Activated CD4-positive, alpha-beta memory T cell treated with anti-CD3 and anti-CD28 coated beads, Interleukin-2, amount 10 ng/mL, durations not matched to agents 7 days and 5 days (primary cell): ENCODE measurements at regions of chr9 and their contacts with region 1.

Region 1: GRCh38 chr9:131125128-131126058 is at the start of gene NUP214:
- DNase-seq: peak; percentile 100
- H3K4me3 Mint-ChIP-seq: peak within 1 kb of the TSS; percentile 95
- H3K27ac Mint-ChIP-seq: peak within 1 kb of the TSS; percentile 94
- H3K4me1 Mint-ChIP-seq: peaks cover 34% of the 10 kb centered on the region
- H3K27me3 Mint-ChIP-seq: no peaks in the 10 kb centered on the region
- total RNA-seq, gene NUP214: 43.8 to 51.3 TPM

Region 2: GRCh38 chr9:130962418-130963316 is 162.7 kb before region 1 on chr9:
- CTCF ChIA-PET with region 1: no interaction called
- POLR2A ChIA-PET with region 1: no interaction called
- DNase-seq: no peak
- H3K4me3 Mint-ChIP-seq: no peak overlapping the region
- H3K27ac Mint-ChIP-seq: no peak overlapping the region
- H3K4me1 Mint-ChIP-seq: peaks cover 6% of the 10 kb centered on the region
- H3K27me3 Mint-ChIP-seq: no peaks in the 10 kb centered on the region

Region 3: DNA sequence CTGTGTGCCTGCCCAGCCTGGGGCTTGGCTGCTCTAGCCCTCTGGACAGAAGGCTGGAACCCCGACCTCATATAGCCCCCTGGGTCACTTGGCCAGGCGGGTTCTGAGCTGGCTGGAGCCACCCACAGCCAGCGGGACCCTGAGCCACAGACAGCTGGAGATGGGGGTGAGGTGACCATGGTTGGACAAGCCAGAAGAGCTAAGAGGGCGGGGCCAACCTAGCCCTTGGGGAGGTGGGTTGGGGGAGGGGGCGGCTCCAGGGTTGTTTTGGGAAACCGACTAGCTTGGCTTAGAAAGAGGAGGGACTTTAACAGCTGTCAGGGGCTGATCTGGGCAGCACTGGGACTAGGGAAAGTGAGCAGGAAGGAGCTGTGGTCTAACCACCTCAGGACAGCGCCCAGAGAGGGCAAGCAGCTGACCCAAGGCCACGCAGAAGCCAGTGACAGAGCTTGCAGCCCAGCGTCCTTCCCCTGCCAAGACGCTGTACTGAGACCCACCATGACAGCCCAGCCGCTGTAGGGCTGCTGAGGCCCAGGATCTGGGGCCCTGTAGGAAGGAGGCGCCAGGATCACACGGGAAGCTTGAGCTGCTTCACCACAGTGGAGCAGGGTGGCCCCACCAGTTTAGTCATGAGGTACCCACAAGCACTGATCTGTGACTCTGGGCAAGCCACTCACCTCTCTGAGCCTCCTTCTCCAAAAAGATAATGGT is 26.8 kb before region 1 on chr9:
- CTCF ChIA-PET with region 1: no interaction called
- POLR2A ChIA-PET with region 1: interaction called, 12 read pairs
- DNase-seq: no peak
- H3K4me3 Mint-ChIP-seq: no peak overlapping the region
- H3K27ac Mint-ChIP-seq: no peak overlapping the region
- H3K4me1 Mint-ChIP-seq: peaks cover 18% of the 10 kb centered on the region
- H3K27me3 Mint-ChIP-seq: peaks cover 33% of the 10 kb centered on the region

Region 4: GRCh38 chr9:131138676-131139075 is 13.3 kb after region 1 on chr9:
- CTCF ChIA-PET with region 1: no interaction called
- POLR2A ChIA-PET with region 1: interaction called, 12 read pairs
- DNase-seq: no peak
- H3K4me3 Mint-ChIP-seq: no peak overlapping the region
- H3K27ac Mint-ChIP-seq: no peak overlapping the region
- H3K4me1 Mint-ChIP-seq: no peaks in the 10 kb centered on the region
- H3K27me3 Mint-ChIP-seq: no peaks in the 10 kb centered on the region

Region 5: DNA sequence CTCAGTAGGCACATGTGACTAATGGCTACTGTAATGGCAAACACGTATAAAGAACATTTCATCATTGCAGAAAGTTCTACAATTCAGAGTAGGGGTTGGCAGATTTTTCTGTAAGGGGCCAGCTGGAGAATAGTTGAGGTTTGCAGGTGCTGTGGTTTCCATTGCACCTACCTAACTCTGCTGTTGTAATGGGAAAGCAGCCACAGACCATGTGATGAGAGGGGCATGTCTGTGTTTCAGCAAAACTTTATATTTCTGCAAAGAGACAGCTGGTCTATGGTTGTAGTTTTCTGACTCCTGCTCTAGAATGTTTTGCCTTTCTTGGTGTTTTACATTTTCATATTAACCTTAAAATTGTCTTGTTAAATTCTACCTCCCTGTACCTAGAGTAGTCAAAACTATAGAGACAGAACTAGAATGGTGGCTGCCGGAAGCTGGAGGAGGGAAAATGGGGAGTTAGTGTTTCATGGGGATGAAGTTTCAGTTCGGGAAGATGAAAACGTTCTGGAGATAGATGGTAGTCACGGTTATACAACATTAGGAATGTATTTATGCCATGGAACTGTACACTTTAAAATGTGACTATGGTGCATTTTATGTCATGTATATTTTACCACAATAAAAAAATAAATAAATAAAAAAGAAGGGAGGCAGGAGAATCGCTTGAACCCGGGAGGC is 44.3 kb after region 1 on chr9:
- CTCF ChIA-PET with region 1: no interaction called
- POLR2A ChIA-PET with region 1: no interaction called
- DNase-seq: no peak
- H3K4me3 Mint-ChIP-seq: no peak overlapping the region
- H3K27ac Mint-ChIP-seq: no peak overlapping the region
- H3K4me1 Mint-ChIP-seq: no peaks in the 10 kb centered on the region
- H3K27me3 Mint-ChIP-seq: no peaks in the 10 kb centered on the region

Region 6: DNA sequence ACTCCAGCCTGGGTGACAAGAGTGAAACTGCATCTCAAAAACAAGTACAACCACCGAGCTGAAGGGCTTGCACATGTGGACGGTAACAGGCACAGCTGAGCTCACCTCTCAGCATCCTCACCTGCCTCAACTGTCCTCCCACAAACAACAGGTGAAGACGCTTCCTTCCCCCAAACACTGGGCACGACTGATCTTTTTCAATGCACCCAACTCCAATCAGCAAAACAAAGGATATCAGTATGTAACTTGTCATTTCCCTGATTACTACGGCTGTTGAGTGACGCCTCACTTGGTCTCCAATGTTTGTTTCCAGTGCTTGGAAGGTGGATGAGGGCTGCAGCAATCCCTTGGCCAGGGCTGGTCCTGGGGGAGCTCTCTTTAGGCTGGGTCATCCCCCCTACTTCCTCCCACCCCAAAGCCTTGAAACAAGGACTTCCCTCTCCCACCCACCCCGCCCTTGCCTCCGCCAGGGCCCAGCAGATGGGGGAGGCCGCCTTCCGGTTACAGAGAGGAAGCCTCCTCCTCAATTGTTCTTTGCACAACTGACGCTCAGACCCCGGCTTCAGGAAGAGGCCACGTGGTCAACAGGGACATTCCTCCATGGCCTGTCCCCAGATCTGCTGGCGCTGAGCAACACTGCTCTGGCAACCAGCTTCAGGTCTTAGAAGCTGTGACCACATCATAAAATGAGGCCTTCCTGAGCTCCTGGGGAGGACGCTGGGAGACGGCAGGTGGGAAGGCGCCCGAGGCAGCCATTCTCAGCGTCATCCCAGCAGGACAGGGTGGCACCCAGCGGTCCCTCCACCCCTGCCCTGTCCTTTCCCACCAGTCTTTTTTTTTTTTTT is 145.0 kb after region 1 on chr9:
- CTCF ChIA-PET with region 1: no interaction called
- POLR2A ChIA-PET with region 1: interaction called, 19 read pairs
- DNase-seq: peak; percentile 65
- H3K4me3 Mint-ChIP-seq: peak overlapping the region; percentile 89
- H3K27ac Mint-ChIP-seq: peak overlapping the region; percentile 97
- H3K4me1 Mint-ChIP-seq: peaks cover 62% of the 10 kb centered on the region
- H3K27me3 Mint-ChIP-seq: no peaks in the 10 kb centered on the region

Region 7: GRCh38 chr9:131418143-131419028 is 293.0 kb after region 1 on chr9:
- CTCF ChIA-PET with region 1: no interaction called
- POLR2A ChIA-PET with region 1: no interaction called
- DNase-seq: no peak
- H3K4me3 Mint-ChIP-seq: peak overlapping the region; percentile 26
- H3K27ac Mint-ChIP-seq: peak overlapping the region; percentile 77
- H3K4me1 Mint-ChIP-seq: peaks cover 76% of the 10 kb centered on the region
- H3K27me3 Mint-ChIP-seq: no peaks in the 10 kb centered on the region

Region 8: GRCh38 chr9:131500939-131501541 is 375.6 kb after region 1 on chr9:
- CTCF ChIA-PET with region 1: no interaction called
- POLR2A ChIA-PET with region 1: interaction called, 11 read pairs
- DNase-seq: peak; percentile 71
- H3K4me3 Mint-ChIP-seq: peak overlapping the region; percentile 60
- H3K27ac Mint-ChIP-seq: peak overlapping the region; percentile 88
- H3K4me1 Mint-ChIP-seq: peaks cover 57% of the 10 kb centered on the region
- H3K27me3 Mint-ChIP-seq: no peaks in the 10 kb centered on the region